Sigmoid colon (tissue), 7 donors: ENCODE measurements at regions of chr11 and their contacts with region 1.

Region 1: DNA sequence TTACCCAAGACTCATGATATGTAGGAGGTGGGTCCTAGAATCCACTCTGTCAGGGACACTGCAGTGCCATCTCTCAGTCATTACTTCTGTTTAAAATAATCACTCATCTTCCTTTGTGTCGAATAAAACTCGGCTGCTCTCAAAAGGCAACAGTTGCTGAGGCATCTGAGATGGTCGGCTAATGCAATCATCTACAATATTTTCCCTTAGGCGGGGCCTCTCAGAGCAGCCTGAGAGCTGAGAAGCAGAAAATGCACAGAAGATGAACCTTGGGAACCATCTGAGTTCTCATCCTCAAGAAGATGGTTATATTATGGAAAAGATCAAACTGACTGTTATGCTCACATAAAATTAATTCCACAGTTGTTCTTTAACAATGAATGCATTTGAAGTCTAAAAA is 1518.2 kb upstream of the TENM4 start:
- DNase-seq: no peak
- H3K4me3 ChIP-seq: no peak overlapping the region
- H3K27ac ChIP-seq: no peak overlapping the region
- H3K4me1 ChIP-seq: no peaks in the 10 kb centered on the region
- H3K27me3 ChIP-seq: no peaks in the 10 kb centered on the region
- CTCF ChIP-seq: no peak
- EP300 ChIP-seq: no peak
- POLR2A ChIP-seq: no peak

Region 2: GRCh38 chr11:80916173-80916798 is 42.7 kb before region 1 on chr11:
- intact Hi-C with region 1: no loop called
- DNase-seq: no peak
- H3K4me3 ChIP-seq: no peak overlapping the region
- H3K27ac ChIP-seq: no peak overlapping the region
- H3K4me1 ChIP-seq: no peaks in the 10 kb centered on the region
- H3K27me3 ChIP-seq: no peaks in the 10 kb centered on the region
- CTCF ChIP-seq: no peak
- EP300 ChIP-seq: no peak
- POLR2A ChIP-seq: no peak

Region 3: DNA sequence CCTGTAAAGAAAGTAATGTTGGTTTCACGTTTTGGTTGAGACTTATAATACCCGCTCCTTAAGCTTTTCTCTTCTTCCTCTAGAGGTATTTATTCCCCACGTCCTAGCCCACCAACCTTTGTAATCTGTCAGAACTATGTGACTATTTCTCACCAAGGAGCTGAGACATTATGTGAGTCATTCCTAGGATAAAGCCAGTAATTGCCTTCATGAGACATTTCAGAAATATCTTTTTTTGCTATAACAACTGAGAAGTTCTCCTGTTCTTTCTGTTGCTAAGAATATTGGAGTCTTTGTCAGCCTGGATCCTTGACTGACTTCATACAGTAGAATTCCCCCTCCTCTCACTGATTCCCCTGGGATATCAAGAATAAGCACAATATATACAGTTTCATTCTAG is 21.1 kb before region 1 on chr11:
- intact Hi-C with region 1: loop called (anchors 1 kb)
- DNase-seq: no peak
- H3K4me3 ChIP-seq: no peak overlapping the region
- H3K27ac ChIP-seq: no peak overlapping the region
- H3K4me1 ChIP-seq: no peaks in the 10 kb centered on the region
- H3K27me3 ChIP-seq: no peaks in the 10 kb centered on the region
- CTCF ChIP-seq: no peak
- EP300 ChIP-seq: no peak
- POLR2A ChIP-seq: no peak